GM12878 (cell line): ENCODE measurements at regions of chr6 and their contacts with region 1.

Region 1: DNA sequence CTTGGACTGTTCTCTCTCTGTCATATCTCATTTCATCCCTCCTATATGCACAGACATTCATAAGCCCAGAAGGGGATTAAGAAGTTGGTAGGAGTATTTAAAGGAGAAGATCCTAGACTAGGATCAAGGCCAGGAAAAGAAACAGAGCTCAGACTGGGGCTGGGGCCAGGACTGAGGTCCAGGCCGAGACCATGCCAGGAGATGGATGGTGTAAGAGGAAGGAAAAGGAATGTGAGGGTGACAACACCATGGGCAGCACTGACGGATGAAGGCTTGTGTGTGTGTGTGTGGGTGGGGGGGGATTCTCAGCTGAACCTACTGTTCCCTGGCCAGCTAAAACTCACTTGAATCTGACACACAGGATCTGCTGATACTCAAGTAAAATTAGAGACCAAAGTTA is 182.1 kb downstream of the KIF6 start:
- DNase-seq: no peak
- ATAC-seq: no peak
- H3K4me3 ChIP-seq: no peak overlapping the region
- H3K27ac ChIP-seq: no peak overlapping the region
- H3K4me1 ChIP-seq: no peaks in the 10 kb centered on the region
- H3K27me3 ChIP-seq: no peaks in the 10 kb centered on the region
- CTCF ChIP-seq: no peak
- EP300 ChIP-seq: no peak
- POLR2A ChIP-seq: no peak
- RAD21 ChIP-seq: no peak

Region 2: GRCh38 chr6:39553860-39554802 is 11.0 kb after region 1 on chr6:
- CTCF ChIA-PET with region 1: interaction called, 15 read pairs
- POLR2A ChIA-PET with region 1: interaction called, 4 read pairs
- RAD21 ChIA-PET with region 1: interaction called, 3 read pairs
- SMC1A ChIA-PET with region 1: interaction called, 8 read pairs
- in situ Hi-C with region 1: no loop called
- intact Hi-C with region 1: no loop called
- DNase-seq: no peak
- ATAC-seq: no peak; the same call in 2 of the 3 replicates
- H3K4me3 ChIP-seq: no peak overlapping the region
- H3K27ac ChIP-seq: no peak overlapping the region
- H3K4me1 ChIP-seq: no peaks in the 10 kb centered on the region
- H3K27me3 ChIP-seq: no peaks in the 10 kb centered on the region
- CTCF ChIP-seq: no peak
- EP300 ChIP-seq: no peak
- POLR2A ChIP-seq: no peak
- RAD21 ChIP-seq: no peak

Region 3: GRCh38 chr6:39561536-39562266 is 18.6 kb after region 1 on chr6:
- CTCF ChIA-PET with region 1: interaction called, 16 read pairs
- POLR2A ChIA-PET with region 1: no interaction called
- RAD21 ChIA-PET with region 1: no interaction called
- SMC1A ChIA-PET with region 1: interaction called, 11 read pairs
- in situ Hi-C with region 1: no loop called
- intact Hi-C with region 1: no loop called
- DNase-seq: no peak
- ATAC-seq: no peak
- H3K4me3 ChIP-seq: no peak overlapping the region
- H3K27ac ChIP-seq: no peak overlapping the region
- H3K4me1 ChIP-seq: no peaks in the 10 kb centered on the region
- H3K27me3 ChIP-seq: no peaks in the 10 kb centered on the region
- CTCF ChIP-seq: no peak
- EP300 ChIP-seq: no peak
- POLR2A ChIP-seq: no peak
- RAD21 ChIP-seq: no peak

Region 4: GRCh38 chr6:39602601-39603519 is 59.8 kb after region 1 on chr6:
- CTCF ChIA-PET with region 1: no interaction called
- POLR2A ChIA-PET with region 1: no interaction called
- RAD21 ChIA-PET with region 1: no interaction called
- SMC1A ChIA-PET with region 1: no interaction called
- in situ Hi-C with region 1: no loop called
- intact Hi-C with region 1: no loop called
- DNase-seq: no peak
- ATAC-seq: no peak
- H3K4me3 ChIP-seq: no peak overlapping the region
- H3K27ac ChIP-seq: no peak overlapping the region
- H3K4me1 ChIP-seq: no peaks in the 10 kb centered on the region
- H3K27me3 ChIP-seq: no peaks in the 10 kb centered on the region
- CTCF ChIP-seq: no peak
- EP300 ChIP-seq: no peak
- POLR2A ChIP-seq: no peak
- RAD21 ChIP-seq: no peak